ENCODE measurements at regions of chr17 and their contacts with region 1.

Region 1: DNA sequence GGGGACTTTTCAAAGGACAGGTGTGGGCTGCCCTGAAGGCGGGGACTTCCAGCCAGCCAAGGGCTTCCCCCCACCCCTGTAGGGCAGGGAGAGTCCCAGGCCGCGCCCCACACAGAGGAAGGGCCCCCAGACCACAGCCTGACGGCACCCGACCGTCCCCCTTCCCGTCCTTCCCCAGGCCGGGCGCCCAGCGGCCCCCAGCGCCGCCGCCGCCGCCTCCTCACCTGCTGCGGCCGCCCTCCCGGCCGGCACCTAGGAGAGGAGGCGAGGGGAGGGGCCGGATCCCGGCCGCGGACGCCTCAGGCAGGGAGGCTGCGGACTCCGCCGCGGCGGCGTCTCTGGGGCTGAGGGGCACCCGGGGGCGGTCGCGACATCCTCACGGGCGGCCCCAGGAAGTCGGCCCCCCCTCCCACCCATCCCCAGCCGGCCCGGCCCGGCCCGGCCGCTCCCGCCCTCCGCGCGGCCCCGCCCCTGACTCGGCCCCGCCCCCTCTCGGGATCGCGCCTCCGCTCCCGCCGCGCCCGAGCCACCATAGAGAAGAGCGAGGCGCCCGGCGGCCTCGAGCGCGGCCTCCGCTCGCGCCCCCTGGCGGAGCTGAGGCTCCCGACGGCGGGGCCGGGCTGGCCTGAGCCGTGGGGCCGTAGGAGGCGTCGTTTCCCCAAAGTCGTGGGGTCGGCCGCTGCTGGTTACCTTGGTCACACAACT is 25.5 kb upstream of the RFFL start:
- DNase-seq: peak; percentile 93
- ATAC-seq: peak; percentile 80
- H3K4me3 Mint-ChIP-seq: peak overlapping the region; percentile 90
- H3K27ac Mint-ChIP-seq: peak overlapping the region; percentile 94
- H3K4me1 Mint-ChIP-seq: peaks cover 41% of the 10 kb centered on the region
- H3K27me3 Mint-ChIP-seq: no peaks in the 10 kb centered on the region
- CTCF ChIP-seq: peak; percentile 67

Region 2: DNA sequence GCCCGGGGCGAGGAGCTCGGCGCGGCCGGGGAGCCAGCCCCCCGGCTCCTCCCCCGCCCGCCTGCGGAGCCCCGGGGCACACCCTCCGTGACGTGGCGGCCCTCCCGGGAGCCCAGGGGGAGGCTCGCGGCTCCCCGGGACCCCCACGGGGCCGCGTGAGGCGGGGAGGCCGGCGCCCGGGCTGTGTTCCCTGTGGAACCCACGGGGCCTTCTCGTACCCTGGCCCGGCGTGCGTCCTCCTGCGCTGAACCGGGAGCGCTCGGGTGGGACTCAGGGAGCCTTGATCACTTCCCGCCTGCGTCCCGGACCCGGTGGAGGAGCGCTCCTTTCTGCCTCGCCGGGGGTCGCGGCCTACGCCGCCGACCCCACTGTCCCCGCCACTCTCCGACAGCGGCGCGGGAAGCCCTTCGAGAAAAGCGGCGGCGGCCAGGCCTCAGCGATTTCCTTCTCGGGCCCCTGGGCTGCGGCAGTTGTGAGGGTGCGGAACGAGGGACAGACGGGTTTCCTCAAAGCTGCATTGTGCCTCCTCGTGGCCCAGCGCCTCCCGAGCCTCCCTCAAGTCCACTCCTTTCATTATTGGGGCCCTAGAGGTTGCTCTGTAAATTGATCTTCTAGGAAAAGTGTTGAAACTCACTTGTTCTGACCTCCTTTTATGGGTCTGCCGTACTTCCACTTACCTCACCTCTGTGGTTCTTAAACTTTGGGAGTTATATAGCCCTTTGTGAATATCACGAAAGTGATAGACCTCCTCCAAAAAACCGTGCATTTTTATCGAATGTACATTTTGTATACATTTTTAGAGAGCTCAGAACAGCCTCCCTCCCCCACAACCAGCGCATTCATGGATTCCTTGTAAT is 108.1 kb before region 1 on chr17:
- CTCF ChIA-PET with region 1: interaction called, 6 read pairs
- POLR2A ChIA-PET with region 1: interaction called, 8 read pairs
- intact Hi-C with region 1: loop called (anchors 5 kb)
- DNase-seq: peak; percentile 84
- ATAC-seq: peak; percentile 87
- H3K4me3 Mint-ChIP-seq: peak overlapping the region; percentile 94
- H3K27ac Mint-ChIP-seq: peak overlapping the region; percentile 89
- H3K4me1 Mint-ChIP-seq: peaks cover 45% of the 10 kb centered on the region
- H3K27me3 Mint-ChIP-seq: no peaks in the 10 kb centered on the region
- CTCF ChIP-seq: peak; percentile 47

Region 3: GRCh38 chr17:34998205-34998604 is 90.8 kb before region 1 on chr17:
- CTCF ChIA-PET with region 1: interaction called, 51 read pairs
- POLR2A ChIA-PET with region 1: interaction called, 7 read pairs
- intact Hi-C with region 1: loop called (anchors 2 kb)
- DNase-seq: peak; percentile 85
- ATAC-seq: peak; percentile 99
- H3K4me3 Mint-ChIP-seq: no peak overlapping the region
- H3K27ac Mint-ChIP-seq: peak overlapping the region; percentile 60
- H3K4me1 Mint-ChIP-seq: peaks cover 5% of the 10 kb centered on the region
- H3K27me3 Mint-ChIP-seq: no peaks in the 10 kb centered on the region
- CTCF ChIP-seq: peak; percentile 77

Region 4: GRCh38 chr17:35046740-35047283 is 42.2 kb before region 1 on chr17:
- CTCF ChIA-PET with region 1: interaction called, 9 read pairs
- POLR2A ChIA-PET with region 1: interaction called, 8 read pairs
- intact Hi-C with region 1: loop called (anchors 5 kb)
- DNase-seq: peak; percentile 82
- ATAC-seq: peak; percentile 93
- H3K4me3 Mint-ChIP-seq: peak overlapping the region; percentile 77
- H3K27ac Mint-ChIP-seq: peak overlapping the region; percentile 97
- H3K4me1 Mint-ChIP-seq: peaks cover 69% of the 10 kb centered on the region
- H3K27me3 Mint-ChIP-seq: no peaks in the 10 kb centered on the region
- CTCF ChIP-seq: no peak

Region 5: DNA sequence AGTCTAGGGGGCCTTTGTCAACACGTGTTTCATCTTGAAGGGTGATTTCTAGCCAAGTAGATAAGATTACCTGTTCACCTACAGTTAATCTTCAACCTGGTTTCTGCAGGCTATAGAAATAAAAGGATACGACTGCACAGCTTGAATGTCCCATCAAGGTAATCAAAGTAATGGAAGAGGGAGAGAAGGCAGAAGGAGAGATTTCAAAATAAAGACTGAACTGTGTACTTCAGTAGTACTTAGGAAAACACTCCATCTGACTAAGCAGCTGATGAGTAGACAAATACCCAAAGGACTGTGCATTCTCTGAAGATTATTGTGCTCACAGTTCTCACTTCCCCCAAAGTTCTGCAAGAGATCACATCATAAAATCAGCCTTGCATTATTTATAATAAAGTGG is 19.7 kb before region 1 on chr17:
- CTCF ChIA-PET with region 1: interaction called, 17 read pairs
- POLR2A ChIA-PET with region 1: interaction called, 12 read pairs
- intact Hi-C with region 1: loop called (anchors 2 kb)
- DNase-seq: no peak
- ATAC-seq: no peak
- H3K4me3 Mint-ChIP-seq: no peak overlapping the region
- H3K27ac Mint-ChIP-seq: no peak overlapping the region
- H3K4me1 Mint-ChIP-seq: peaks cover 62% of the 10 kb centered on the region
- H3K27me3 Mint-ChIP-seq: no peaks in the 10 kb centered on the region
- CTCF ChIP-seq: no peak

Measured in activated CD8-positive, alpha-beta T cell treated with anti-CD3 and anti-CD28 coated beads for 36 hours (primary cell).